HepG2 (cell line): ENCODE measurements at regions of chr17 and their contacts with region 1.

Region 1: GRCh38 chr17:7862692-7863437 is 5.1 kb downstream of the CYB5D1 start:
- DNase-seq: peak; percentile 91
- ATAC-seq: peak; percentile 77
- H3K4me3 ChIP-seq: peak overlapping the region in 1 of 3 experiments; percentile 11; a peak in 1 of 6 replicates
- H3K27ac ChIP-seq: peak overlapping the region; percentile 81
- H3K4me1 ChIP-seq: peaks cover 64% of the 10 kb centered on the region
- H3K27me3 ChIP-seq: no peaks in the 10 kb centered on the region; a peak in 1 of 5 replicates
- CTCF ChIP-seq: peak; percentile 78
- EP300 ChIP-seq: peak in 1 of 2 experiments; percentile 82; a peak in 2 of 4 replicates
- POLR2A ChIP-seq: no peak
- RAD21 ChIP-seq: peak; percentile 71

Region 2: DNA sequence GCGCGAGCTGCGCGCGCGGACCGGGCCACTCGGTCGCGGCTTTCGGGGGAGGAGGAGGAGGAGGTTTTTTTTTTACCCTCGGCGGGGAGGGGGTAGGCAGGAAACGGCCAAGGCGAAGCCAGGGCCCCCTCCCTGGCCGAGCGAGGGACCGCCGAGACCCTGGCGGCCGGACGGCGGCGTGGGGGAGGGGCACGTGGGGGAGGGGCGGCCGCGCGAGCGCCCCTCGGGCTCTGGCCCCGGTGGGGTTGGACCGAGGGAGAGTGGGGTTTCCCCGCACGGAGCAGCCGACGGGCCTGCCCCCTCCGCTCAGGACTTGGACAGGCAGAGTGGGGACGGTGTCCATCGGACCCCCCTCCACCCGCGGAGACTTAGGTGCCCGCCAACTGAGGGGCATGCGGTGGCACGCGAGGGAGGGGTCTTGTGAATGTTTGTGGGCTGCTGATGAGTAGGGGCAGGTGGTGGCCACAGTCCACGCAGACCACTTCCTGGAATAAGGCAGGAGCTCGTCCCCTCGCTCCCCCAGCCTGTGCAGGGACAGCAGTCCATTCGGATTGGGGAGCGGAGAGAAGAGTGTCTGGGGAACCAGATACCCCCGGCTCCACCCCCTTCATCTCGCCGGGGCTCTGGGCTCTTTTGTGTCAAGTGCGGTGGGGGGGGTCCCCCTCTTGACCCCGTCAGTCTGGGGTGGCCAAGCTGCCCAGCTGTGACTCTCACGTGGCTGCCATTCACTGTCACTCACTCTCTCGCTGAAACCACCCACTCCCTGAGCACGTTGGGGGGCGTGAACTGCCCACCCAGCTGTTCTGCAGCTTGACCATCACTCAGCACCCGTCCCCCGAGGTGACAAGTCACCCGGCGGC is 22.7 kb after region 1 on chr17:
- CTCF ChIA-PET with region 1: interaction called, 5 read pairs
- POLR2A ChIA-PET with region 1: interaction called, 4 read pairs
- in situ Hi-C with region 1: no loop called
- intact Hi-C with region 1: loop called (anchors 1 kb)
- DNase-seq: no peak
- ATAC-seq: peak; percentile 23; the same call in 2 of the 3 replicates
- H3K4me3 ChIP-seq: peak overlapping the region; percentile 45 to 76 (median 68)
- H3K27ac ChIP-seq: peak overlapping the region; percentile 39
- H3K4me1 ChIP-seq: peaks cover 50% of the 10 kb centered on the region
- H3K27me3 ChIP-seq: peaks cover 1 to 22% of the 10 kb centered on the region in 2 experiments; a peak in 2 of 5 replicates
- CTCF ChIP-seq: peak; percentile 7; the same call in 1 of the 2 replicates
- EP300 ChIP-seq: no peak
- POLR2A ChIP-seq: no peak
- RAD21 ChIP-seq: no peak

Region 3: GRCh38 chr17:7897773-7898172 is 34.9 kb after region 1 on chr17:
- CTCF ChIA-PET with region 1: interaction called, 39 read pairs
- POLR2A ChIA-PET with region 1: no interaction called
- in situ Hi-C with region 1: loop called (anchors 5 kb)
- intact Hi-C with region 1: loop called (anchors 1 kb)
- DNase-seq: peak; percentile 62
- ATAC-seq: peak; percentile 87
- H3K4me3 ChIP-seq: no peak overlapping the region
- H3K27ac ChIP-seq: no peak overlapping the region
- H3K4me1 ChIP-seq: peaks cover 15% of the 10 kb centered on the region
- H3K27me3 ChIP-seq: no peaks in the 10 kb centered on the region
- CTCF ChIP-seq: peak; percentile 74
- EP300 ChIP-seq: no peak
- POLR2A ChIP-seq: no peak
- RAD21 ChIP-seq: peak; percentile 86

Region 4: GRCh38 chr17:7997186-7997585 is 134.3 kb after region 1 on chr17:
- CTCF ChIA-PET with region 1: no interaction called
- POLR2A ChIA-PET with region 1: no interaction called
- in situ Hi-C with region 1: no loop called
- intact Hi-C with region 1: no loop called
- DNase-seq: peak; percentile 25
- ATAC-seq: peak; percentile 75
- H3K4me3 ChIP-seq: no peak overlapping the region
- H3K27ac ChIP-seq: no peak overlapping the region
- H3K4me1 ChIP-seq: peaks cover 4% of the 10 kb centered on the region
- H3K27me3 ChIP-seq: peaks cover 0 to 16% of the 10 kb centered on the region in 2 experiments; a peak in 2 of 5 replicates
- CTCF ChIP-seq: peak; percentile 52
- EP300 ChIP-seq: no peak
- POLR2A ChIP-seq: no peak
- RAD21 ChIP-seq: no peak

Region 5: GRCh38 chr17:8109661-8110464 is 247.0 kb after region 1 on chr17:
- CTCF ChIA-PET with region 1: no interaction called
- POLR2A ChIA-PET with region 1: no interaction called
- in situ Hi-C with region 1: no loop called
- intact Hi-C with region 1: no loop called
- DNase-seq: no peak
- ATAC-seq: peak; percentile 89
- H3K4me3 ChIP-seq: peak overlapping the region in 1 of 3 experiments; percentile 23; a peak in 1 of 6 replicates
- H3K27ac ChIP-seq: no peak overlapping the region
- H3K4me1 ChIP-seq: no peaks in the 10 kb centered on the region
- H3K27me3 ChIP-seq: peaks cover 9 to 62% of the 10 kb centered on the region in 2 experiments
- CTCF ChIP-seq: peak; percentile 90
- EP300 ChIP-seq: no peak
- POLR2A ChIP-seq: no peak
- RAD21 ChIP-seq: peak; percentile 61